ENCODE measurements at regions of chr7 and their contacts with region 1.

Region 1: GRCh38 chr7:13832346-13832745 is 157.1 kb downstream of the ETV1 start:
- DNase-seq: no peak
- H3K4me3 ChIP-seq: no peak overlapping the region
- H3K27ac ChIP-seq: no peak overlapping the region
- H3K4me1 ChIP-seq: no peaks in the 10 kb centered on the region
- H3K27me3 ChIP-seq: no peaks in the 10 kb centered on the region
- CTCF ChIP-seq: no peak

Region 2: GRCh38 chr7:13794581-13794980 is 37.8 kb before region 1 on chr7:
- CTCF ChIA-PET with region 1: no interaction called
- POLR2A ChIA-PET with region 1: no interaction called
- intact Hi-C with region 1: loop called (anchors 2 kb)
- DNase-seq: no peak
- H3K4me3 ChIP-seq: no peak overlapping the region
- H3K27ac ChIP-seq: no peak overlapping the region
- H3K4me1 ChIP-seq: no peaks in the 10 kb centered on the region
- H3K27me3 ChIP-seq: no peaks in the 10 kb centered on the region
- CTCF ChIP-seq: no peak

Region 3: DNA sequence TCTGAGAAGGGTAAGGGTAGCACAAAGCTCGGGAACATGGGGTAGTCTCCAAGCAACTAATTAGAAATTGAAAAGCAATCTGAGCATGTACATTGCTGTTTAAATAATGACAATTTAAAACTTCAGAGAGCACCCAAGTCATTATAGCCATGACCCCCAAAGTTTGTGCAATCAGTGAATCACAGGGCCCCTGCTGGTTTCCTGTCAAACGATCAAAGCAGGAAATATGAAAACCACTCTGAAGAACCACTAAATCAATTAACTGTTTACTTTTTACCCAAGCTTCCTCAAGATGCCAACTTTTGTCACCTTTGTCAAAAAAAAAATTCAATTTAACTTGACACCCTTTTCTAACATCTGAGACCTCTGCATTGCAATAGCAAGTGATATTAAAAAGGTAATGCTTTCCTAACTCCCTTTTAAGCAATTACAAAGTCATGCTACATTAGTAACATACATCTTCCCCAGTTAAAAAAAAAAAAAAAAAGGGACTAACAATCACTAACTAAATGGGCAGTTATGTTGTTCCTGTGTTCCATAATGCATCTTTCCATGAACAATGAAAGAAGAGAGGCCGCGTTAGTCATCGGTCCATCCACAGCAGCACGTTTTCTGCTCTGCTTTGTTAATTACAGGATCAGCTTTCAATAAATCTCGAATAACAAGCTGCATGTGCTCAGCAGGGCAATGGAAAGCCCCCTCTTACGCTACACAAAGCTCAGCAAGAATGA is 76.5 kb after region 1 on chr7:
- CTCF ChIA-PET with region 1: no interaction called
- POLR2A ChIA-PET with region 1: no interaction called
- intact Hi-C with region 1: no loop called
- DNase-seq: peak in 1 of 2 experiments; percentile 73
- H3K4me3 ChIP-seq: no peak overlapping the region
- H3K27ac ChIP-seq: no peak overlapping the region
- H3K4me1 ChIP-seq: peaks cover 12% of the 10 kb centered on the region
- H3K27me3 ChIP-seq: no peaks in the 10 kb centered on the region
- CTCF ChIP-seq: no peak

Region 4: GRCh38 chr7:13963925-13964324 is 131.6 kb after region 1 on chr7:
- CTCF ChIA-PET with region 1: no interaction called
- POLR2A ChIA-PET with region 1: no interaction called
- intact Hi-C with region 1: no loop called
- DNase-seq: no peak
- H3K4me3 ChIP-seq: no peak overlapping the region
- H3K27ac ChIP-seq: no peak overlapping the region
- H3K4me1 ChIP-seq: no peaks in the 10 kb centered on the region
- H3K27me3 ChIP-seq: no peaks in the 10 kb centered on the region
- CTCF ChIP-seq: no peak

Region 5: GRCh38 chr7:14209896-14210484 is 377.6 kb after region 1 on chr7:
- CTCF ChIA-PET with region 1: no interaction called
- POLR2A ChIA-PET with region 1: no interaction called
- intact Hi-C with region 1: no loop called
- DNase-seq: no peak
- H3K4me3 ChIP-seq: no peak overlapping the region
- H3K27ac ChIP-seq: no peak overlapping the region
- H3K4me1 ChIP-seq: no peaks in the 10 kb centered on the region
- H3K27me3 ChIP-seq: no peaks in the 10 kb centered on the region
- CTCF ChIP-seq: no peak